Right ventricle myocardium inferior (tissue), 1 donor: ENCODE measurements at regions of chr1 and their contacts with region 1.

Region 1: GRCh38 chr1:17059739-17060460 is 6.1 kb upstream of the SDHB start:
- DNase-seq: peak; percentile 85
- ATAC-seq: peak; percentile 84

Region 2: GRCh38 chr1:16999863-17000262 is 60.0 kb before region 1 on chr1:
- intact Hi-C with region 1: no loop called
- DNase-seq: no peak
- ATAC-seq: no peak

Region 3: DNA sequence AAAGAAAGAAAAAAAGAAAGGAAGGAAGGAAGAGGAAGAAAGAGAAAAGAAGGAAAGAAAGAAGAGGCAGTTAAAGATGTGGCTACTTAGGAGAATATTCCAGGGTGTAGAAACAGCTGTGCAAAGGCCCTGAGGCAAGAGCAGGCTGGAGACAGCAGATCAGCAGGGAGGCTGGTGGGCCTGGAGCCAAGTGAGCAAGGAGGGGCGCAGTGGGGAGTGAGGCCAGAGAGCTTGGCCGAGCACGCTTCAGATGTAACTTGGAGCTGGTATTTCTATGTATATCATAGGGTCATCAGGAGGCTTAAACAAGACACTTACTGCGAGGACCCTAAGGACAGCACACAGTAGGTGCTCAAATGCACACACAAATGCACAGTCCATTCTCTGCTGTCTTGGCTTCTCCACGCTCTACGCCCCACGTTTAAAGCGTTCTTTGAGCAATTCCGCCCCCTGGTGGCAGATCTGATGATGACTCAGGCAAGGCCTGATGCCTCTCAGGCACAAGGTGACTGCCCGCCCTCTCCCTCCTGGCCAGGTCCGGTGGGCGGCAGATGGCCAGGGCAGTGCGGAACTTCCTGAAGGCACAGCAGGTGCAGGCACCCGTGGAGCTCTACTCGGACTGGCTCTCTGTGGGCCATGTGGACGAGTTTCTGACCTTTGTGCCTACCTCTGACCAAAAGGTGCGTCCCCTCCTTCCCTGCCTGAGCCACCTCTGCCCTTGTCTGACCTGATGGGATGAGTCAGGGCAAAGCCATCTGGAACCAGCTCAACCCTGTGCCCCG is 177.1 kb after region 1 on chr1:
- intact Hi-C with region 1: loop called (anchors 1 kb)
- DNase-seq: peak; percentile 91
- ATAC-seq: peak; percentile 76

Region 4: DNA sequence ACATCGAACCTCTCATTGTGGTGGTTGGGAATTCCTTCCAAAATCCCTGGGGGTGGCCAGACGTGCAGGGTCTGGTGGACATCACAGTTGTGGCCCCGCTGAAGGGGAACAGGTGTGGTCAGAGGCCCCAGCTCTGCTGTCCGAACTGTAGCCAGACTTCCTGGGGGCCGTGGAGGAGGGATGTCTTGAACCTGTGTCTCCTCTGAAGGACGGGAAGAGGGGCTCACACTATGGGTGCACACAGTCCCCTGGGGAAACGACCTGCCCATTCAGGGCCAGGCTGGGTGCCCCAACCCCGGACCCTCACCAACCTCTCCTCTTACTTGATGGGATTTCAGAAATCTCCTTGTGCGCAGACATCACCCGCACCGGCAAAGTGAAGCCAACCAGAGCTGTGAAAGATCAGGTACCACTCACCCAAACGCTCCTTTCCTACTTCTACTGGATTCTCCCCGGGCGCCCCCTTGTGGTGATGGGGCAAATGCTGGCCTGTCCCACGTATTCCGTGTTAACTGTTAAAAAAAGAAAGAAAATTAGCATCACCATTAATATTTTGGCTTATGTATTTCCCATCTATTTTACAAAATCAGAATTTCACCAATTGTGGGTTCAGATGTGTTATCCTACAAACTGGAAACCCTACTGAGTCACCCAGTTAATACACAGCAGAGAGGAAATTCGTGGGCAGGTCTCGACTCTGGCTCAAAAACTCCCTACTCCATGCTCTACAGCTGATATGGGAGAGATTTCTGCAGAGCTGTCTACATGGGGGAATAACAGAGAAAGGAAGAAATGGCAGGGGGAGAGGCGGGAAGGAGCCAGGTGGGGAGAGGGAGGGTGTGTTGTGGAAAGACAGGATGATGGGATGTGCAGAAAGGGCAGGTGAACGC is 276.2 kb after region 1 on chr1:
- intact Hi-C with region 1: loop called (anchors 10 kb)
- DNase-seq: peak; percentile 80
- ATAC-seq: no peak

Region 5: DNA sequence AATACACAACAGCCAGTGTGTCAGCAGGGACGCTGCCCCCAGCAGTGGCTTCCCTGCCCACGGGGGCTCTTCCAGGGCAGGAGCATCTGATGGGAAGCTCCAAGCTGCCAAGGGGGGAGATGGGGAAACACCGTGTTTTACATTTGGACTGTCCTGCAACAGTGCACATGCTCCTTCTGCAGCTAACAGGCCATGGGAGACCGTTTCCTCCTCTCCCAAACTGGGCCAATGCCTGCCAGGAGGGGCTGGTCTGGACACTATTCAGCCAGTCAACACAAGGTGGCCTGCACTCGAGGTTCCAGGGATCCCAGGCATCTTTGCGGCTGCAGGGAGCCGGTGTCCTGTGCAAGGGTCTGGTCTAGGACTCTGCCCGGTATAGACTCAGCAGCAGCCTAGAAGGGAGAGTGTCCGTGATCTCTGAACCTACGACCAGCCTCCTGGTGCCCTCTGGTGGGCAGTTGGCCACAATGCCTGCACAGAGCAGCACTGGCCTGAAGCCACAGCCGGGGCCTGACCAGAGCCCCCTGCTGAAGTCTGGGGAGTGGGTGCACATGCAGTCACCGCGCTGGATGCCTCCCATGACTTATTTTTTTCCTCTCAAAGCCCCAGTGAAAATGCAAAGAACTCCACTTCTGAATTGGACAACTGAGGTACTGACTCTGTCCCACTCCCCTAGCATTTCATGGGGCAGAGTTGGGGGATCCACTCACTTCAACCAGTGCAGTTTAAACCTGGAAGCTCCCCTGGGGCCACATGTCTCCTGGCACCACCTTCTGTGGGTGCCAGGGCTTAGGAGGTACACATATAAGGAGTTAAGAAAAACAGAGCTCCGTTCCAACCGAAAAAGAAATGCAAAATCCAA is 346.2 kb after region 1 on chr1:
- intact Hi-C with region 1: loop called (anchors 5 kb)
- DNase-seq: peak; percentile 77
- ATAC-seq: peak; percentile 89